Mucosa of descending colon (tissue), 3 donors: ENCODE measurements at regions of chr11 and their contacts with region 1.

Region 1: DNA sequence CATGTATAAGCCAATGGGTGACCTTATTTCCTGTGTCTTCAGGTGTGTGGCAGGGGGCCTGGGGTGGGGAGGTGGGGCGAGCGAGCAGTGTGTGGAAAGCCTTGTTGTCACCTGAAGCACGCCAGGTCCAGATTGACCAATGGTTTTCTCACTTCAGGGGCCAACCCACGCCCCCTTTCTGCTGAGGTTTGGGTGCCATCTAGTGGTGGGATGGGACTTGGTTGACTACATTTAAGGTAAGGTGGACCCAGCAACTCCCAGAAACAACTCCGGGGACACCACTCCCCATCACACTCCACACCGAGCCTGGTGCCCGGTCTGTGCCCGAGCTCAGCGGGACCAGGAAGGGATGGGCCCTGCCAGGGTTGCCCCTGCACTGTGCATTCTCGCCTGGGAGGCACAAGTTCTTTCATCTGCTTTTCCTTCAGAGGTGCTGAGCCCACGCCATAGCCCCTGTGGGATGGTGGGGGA is 40.0 kb downstream of the TPCN2 start:
- DNase-seq: peak in 2 of 3 donors; percentile 71 to 88
- ATAC-seq: peak; percentile 83
- H3K4me3 ChIP-seq: no peak overlapping the region
- H3K4me1 ChIP-seq: no peaks in the 10 kb centered on the region
- CTCF ChIP-seq: no peak

Region 2: DNA sequence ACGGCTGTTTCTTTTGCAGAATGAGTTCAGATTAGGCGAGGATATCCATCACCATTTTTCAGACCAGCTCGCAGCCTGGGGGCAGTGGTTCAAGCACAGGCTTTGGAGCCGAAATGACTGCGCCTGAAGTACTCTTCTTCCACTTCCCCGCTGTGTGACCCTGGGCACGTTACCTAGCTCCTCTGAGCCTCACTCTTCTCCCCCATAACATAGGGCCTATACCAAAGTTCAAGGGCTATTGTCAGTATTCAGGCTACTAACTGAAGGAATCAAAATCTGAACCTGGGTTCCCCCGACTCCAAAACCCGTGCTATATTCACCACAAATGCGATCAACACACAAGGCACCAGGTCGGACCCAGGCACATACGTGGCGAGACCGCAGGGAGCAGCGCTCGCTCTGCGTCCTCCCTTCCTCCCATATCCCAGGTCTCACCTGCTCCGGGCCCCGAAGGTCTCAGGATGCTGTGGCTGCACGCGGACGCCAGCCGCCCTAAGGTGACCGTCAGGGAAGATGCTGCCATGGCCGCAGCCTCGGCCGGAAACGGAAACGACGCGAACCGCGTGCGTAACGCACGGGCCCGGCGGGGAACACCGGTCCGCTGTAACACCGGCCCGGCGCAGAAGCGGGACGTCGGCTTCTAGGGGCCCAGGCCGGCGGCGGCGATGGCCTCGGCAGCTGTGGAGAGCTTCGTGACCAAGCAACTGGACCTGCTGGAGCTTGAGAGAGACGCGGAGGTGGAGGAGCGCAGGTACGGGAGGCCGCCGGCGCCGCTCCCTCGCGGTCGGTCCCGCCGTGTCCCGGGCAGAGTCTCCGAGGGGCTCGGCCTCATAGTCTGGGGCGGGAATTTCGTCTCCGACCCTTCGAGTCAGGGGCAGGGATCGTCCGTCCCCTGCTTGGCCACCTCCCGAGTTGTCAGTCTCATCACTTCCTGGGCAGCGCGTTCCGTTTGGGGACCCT is 185.1 kb before region 1 on chr11 and contains the starts of genes IGHMBP2 and MRPL21:
- intact Hi-C with region 1: loop called in 1 of 2 experiments (anchors 10 kb)
- DNase-seq: peak; percentile 88 to 90 (median 89)
- ATAC-seq: peak; percentile 99
- H3K4me3 ChIP-seq: peak within 1 kb of the TSS; percentile 80
- H3K4me1 ChIP-seq: peaks cover 17% of the 10 kb centered on the region
- CTCF ChIP-seq: no peak
- total RNA-seq, gene IGHMBP2: 19.7 to 44.7 (median 25.8) TPM
- total RNA-seq, gene MRPL21: 49.2 to 78.4 (median 72.6) TPM